Mammary epithelial cell (primary cell): ENCODE measurements at regions of chr9 and their contacts with region 1.

Region 1: GRCh38 chr9:76181020-76181641 is 213.1 kb downstream of the RFK start:
- DNase-seq: peak; percentile 79
- H3K4me3 ChIP-seq: no peak overlapping the region
- H3K27ac ChIP-seq: peak overlapping the region; percentile 19
- H3K4me1 ChIP-seq: peaks cover 17% of the 10 kb centered on the region
- H3K27me3 ChIP-seq: no peaks in the 10 kb centered on the region
- CTCF ChIP-seq: no peak

Region 2: DNA sequence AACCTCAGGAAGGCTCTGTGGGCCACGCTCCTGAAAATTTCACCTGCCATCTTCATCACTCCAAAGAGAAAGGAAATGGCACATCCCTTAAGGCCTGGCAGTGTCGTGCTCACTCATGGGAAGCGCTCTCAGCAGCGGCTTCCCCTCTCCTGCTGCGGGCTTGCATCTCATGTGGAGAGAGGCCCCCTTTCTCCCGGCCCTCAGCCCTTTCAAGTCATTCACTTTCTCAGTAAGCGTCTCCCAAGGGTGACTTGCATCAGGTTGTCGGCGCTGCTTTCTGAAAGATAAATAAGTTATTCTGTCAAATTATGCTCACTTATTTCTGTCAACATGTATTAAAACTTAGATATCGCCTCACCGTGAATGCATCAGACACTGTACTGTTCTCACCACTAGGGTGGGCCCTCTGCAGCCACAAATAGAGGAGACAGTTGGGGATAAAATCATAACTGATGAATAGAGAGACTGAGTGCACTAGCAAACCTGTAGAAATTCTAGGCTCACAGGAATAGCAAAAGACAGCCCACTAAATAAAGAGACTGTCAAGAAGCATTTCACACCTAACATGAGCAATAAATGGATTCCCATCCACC is 38.5 kb after region 1 on chr9:
- CTCF ChIA-PET with region 1: no interaction called
- dilution Hi-C with region 1: no loop called
- in situ Hi-C with region 1: no loop called
- intact Hi-C with region 1: loop called (anchors 2 kb)
- DNase-seq: no peak
- H3K4me3 ChIP-seq: no peak overlapping the region
- H3K27ac ChIP-seq: no peak overlapping the region
- H3K4me1 ChIP-seq: peaks cover 18% of the 10 kb centered on the region
- H3K27me3 ChIP-seq: no peaks in the 10 kb centered on the region
- CTCF ChIP-seq: peak in 1 of 2 donors; percentile 8